ENCODE measurements at regions of chr3 and their contacts with region 1.

Region 1: DNA sequence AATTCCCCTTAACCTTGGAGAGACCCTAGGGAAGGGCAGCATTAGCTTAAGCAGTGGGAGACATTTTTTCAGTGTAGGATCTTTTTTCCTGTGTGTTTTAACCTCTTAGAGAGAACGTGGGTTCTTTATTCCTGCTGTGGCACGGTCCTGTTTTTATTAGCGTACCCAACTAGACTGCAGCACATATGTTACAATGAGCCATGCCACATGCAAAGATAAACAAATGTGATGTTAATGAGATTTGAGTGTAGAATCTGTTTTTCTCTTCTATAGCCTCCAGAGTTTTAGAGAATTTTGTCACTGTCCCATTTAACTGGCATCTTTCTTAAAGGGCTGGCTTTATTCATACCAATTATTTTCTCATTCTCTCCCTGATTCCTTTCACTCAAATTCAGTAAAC is 347.5 kb downstream of the CNTN4 start:
- DNase-seq: no peak
- H3K4me3 Mint-ChIP-seq: no peak overlapping the region
- H3K27ac Mint-ChIP-seq: no peak overlapping the region
- H3K4me1 Mint-ChIP-seq: no peaks in the 10 kb centered on the region
- H3K27me3 Mint-ChIP-seq: no peaks in the 10 kb centered on the region

Region 2: DNA sequence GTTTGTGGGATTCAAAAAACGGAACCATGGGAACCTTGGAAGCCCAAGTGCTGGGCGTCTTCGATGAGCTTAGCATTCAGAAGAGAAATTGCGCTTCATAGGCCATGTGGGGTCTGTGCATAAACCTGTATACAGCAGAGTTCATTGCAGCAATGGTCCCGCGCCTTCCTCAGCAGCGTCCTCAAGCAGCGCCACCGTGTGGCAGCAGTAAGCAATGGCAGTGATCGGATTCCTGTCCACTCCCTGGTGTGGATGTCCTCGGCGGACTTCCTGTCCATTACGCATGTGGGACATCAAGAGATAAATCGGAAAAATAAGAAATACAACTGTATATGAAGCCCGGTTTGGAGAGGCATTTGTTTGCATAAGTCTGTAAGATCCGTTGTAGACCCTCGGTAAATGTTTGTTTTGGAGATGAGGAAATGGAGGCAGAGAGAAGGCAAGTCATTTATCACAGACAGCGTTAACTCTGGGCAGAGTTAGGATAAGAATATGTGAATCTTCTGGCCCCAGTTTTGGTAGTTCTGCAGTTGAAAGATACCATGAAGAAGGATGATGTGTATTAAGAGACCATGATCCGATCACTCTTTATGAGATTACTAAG is 289.8 kb before region 1 on chr3:
- CTCF ChIA-PET with region 1: no interaction called
- POLR2A ChIA-PET with region 1: no interaction called
- intact Hi-C with region 1: loop called (anchors 2 kb)
- DNase-seq: peak; percentile 22
- H3K4me3 Mint-ChIP-seq: no peak overlapping the region
- H3K27ac Mint-ChIP-seq: no peak overlapping the region
- H3K4me1 Mint-ChIP-seq: no peaks in the 10 kb centered on the region
- H3K27me3 Mint-ChIP-seq: no peaks in the 10 kb centered on the region

Measured in activated CD4-positive, alpha-beta memory T cell treated with anti-CD3 and anti-CD28 coated beads for 36 hours (primary cell).